ENCODE measurements at regions of chr13 and their contacts with region 1.

Region 1: GRCh38 chr13:25574437-25575411 is 202.9 kb downstream of the ATP8A2 start:
- DNase-seq: peak; percentile 80
- H3K4me3 ChIP-seq: no peak overlapping the region
- H3K27ac ChIP-seq: no peak overlapping the region
- H3K4me1 ChIP-seq: no peaks in the 10 kb centered on the region
- H3K27me3 ChIP-seq: no peaks in the 10 kb centered on the region; the same call in 1 of the 2 replicates

Region 2: GRCh38 chr13:26062844-26063444 is 488.2 kb after region 1 on chr13:
- in situ Hi-C with region 1: loop called (anchors 5 kb)
- DNase-seq: peak; percentile 63
- H3K4me3 ChIP-seq: no peak overlapping the region
- H3K27ac ChIP-seq: no peak overlapping the region
- H3K4me1 ChIP-seq: peaks cover 3% of the 10 kb centered on the region; the same call in 1 of the 2 replicates
- H3K27me3 ChIP-seq: peaks cover 11% of the 10 kb centered on the region

Region 3: DNA sequence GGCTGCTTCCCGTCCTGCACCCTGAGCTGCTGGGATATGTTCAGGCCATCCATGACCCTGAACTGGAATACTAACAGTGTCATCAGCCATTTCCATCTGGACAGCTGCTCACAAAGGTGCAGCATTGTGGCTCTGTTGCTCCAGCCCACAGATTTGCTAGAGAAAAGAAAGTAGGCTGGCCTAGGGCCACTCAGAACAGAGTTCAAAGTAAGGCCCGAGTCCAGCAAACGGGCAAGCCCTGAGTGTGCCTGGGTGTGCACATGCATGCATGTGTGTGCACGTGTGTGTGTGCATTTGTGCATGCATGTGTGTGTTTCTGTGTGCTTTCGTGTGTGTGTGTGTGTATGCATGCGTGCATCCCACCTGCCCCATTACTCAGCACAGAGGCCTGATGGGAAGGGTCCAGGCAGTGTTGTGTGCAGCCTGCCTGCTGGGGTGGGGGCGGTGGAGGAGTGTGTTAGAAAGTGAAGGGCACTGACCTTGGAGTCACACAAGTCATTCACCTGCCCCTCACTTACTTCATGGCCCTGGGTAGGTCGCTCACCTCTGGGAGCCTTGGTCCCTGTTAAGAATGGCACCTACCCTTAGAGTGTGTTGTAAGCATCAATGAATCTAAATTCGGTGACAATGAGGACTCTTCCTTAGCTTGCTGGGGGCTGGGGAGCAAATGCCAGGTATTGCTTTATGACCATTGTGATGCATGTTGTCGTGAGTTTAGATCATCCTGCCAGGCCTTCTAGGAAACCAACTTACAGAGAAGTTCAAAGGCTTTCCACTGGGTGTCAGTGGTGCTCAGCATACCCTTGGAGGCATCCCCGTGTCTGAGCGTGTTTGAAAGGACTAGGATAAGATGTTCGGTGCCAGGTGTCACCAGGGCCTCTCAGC is 1132.6 kb after region 1 on chr13:
- in situ Hi-C with region 1: loop called (anchors 25 kb)
- DNase-seq: peak; percentile 73
- H3K4me3 ChIP-seq: no peak overlapping the region
- H3K27ac ChIP-seq: no peak overlapping the region
- H3K4me1 ChIP-seq: no peaks in the 10 kb centered on the region
- H3K27me3 ChIP-seq: peaks cover 7% of the 10 kb centered on the region; the same call in 1 of the 2 replicates